Ascending aorta (tissue), 2 donors: ENCODE measurements at regions of chr5 and their contacts with region 1.

Region 1: DNA sequence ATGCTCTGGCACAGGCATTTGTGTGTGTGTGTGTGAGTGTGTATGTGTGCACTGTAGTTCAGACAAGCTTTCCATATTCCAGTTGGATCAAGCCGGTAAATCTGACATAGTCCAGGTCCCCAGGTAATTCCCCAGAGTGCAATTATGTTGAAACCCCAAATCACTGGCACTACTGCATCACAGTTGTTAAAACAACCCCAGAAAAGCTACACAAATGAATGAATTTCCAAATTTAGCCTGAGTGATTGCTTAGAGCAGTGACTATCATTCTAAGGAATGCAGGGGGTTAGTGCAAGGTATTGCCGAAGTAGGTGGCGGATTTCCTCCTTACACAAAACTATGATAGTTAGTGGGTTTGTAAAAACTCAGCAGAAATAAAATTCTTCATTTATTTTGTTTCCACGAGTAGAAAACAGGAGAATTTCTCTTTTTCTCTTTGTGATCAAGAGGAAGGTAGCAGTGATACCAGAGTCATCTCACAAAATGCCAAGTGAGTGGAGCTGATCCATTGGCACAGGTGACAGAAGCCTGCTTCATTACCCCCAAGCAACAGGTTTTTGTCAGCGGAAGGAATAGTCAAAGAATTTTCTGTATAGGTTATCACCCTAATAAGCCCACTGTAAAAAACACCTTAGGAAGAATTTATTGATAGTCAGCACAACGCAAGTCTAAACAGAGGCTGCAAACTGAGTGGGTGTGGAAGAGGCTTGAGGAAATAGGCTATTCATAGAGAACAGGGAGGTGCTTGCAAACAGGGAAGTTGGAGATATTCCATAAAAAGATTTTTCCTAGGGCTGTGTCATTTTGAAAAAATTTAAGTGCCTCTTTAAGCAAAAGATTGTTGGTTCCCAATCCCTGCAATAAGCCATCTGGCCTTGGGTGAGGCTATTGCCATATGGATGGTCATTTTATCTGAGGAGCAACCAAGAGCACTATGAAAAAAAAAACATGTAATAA is 385.1 kb downstream of the CHSY3 start:
- DNase-seq: peak in 1 of 2 donors; percentile 66
- H3K4me3 ChIP-seq: peak overlapping the region in 1 of 2 donors; percentile 20
- H3K27ac ChIP-seq: peak overlapping the region; percentile 62 to 75
- H3K4me1 ChIP-seq: peaks cover 0 to 25% of the 10 kb centered on the region in 2 donors
- H3K27me3 ChIP-seq: no peaks in the 10 kb centered on the region
- CTCF ChIP-seq: no peak

Region 2: GRCh38 chr5:130116462-130116861 is 172.9 kb before region 1 on chr5:
- intact Hi-C with region 1: loop called (anchors 5 kb)
- DNase-seq: peak in 1 of 2 donors; percentile 61
- H3K4me3 ChIP-seq: no peak overlapping the region
- H3K27ac ChIP-seq: peak overlapping the region in 1 of 2 donors; percentile 10
- H3K4me1 ChIP-seq: no peaks in the 10 kb centered on the region
- H3K27me3 ChIP-seq: no peaks in the 10 kb centered on the region
- CTCF ChIP-seq: no peak

Region 3: GRCh38 chr5:130337179-130337888 is 47.9 kb after region 1 on chr5:
- intact Hi-C with region 1: loop called (anchors 5 kb)
- DNase-seq: no peak
- H3K4me3 ChIP-seq: peak overlapping the region in 1 of 2 donors; percentile 6
- H3K27ac ChIP-seq: peak overlapping the region; percentile 24 to 50
- H3K4me1 ChIP-seq: no peaks in the 10 kb centered on the region
- H3K27me3 ChIP-seq: no peaks in the 10 kb centered on the region
- CTCF ChIP-seq: no peak